Prostate gland (tissue), 2 donors: ENCODE measurements at regions of chr18 and their contacts with region 1.

Region 1: GRCh38 chr18:23619388-23619881 is 33.1 kb upstream of the NPC1 start:
- DNase-seq: no peak
- H3K4me3 ChIP-seq: peak overlapping the region; percentile 29 to 38
- H3K27ac ChIP-seq: peak overlapping the region; percentile 73 to 74
- H3K4me1 ChIP-seq: no peaks in the 10 kb centered on the region
- H3K27me3 ChIP-seq: no peaks in the 10 kb centered on the region
- CTCF ChIP-seq: peak in 1 of 4 experiments; percentile 6
- POLR2A ChIP-seq: no peak

Region 2: DNA sequence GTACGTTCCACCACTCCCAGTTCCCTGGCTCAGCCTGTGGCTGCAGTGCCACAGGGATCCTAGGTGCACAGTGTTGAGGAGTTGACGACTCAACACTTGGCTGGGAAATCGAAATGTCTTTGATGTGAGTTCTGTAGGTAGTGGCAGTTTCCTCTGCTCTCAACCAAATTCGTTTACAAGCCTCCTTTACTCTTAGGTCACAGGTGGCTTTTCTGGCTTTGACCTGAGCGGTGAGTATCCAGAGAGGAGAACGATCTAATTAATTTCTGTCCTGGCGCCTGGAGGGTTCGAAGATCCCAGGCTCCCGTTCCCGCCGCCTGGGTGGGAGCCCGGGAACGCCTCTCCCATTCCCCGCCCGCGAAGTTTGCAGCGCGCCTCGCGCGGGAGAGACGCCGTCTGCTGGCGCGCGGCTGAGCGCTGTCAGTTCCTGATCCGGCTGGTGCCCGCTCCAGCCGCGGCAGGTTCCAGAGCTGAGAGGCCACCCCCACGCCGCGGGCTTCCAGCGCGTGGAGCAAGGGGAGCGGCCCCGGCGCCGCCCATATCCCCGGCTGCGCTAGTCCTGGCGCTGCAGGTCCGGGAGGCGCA is 69.7 kb after region 1 on chr18 and contains the start of gene LAMA3:
- intact Hi-C with region 1: loop called (anchors 5 kb)
- DNase-seq: peak; percentile 60
- H3K4me3 ChIP-seq: peak within 1 kb of the TSS; percentile 46 to 50
- H3K27ac ChIP-seq: peak within 1 kb of the TSS; percentile 58
- H3K4me1 ChIP-seq: no peaks in the 10 kb centered on the region
- H3K27me3 ChIP-seq: no peaks in the 10 kb centered on the region
- CTCF ChIP-seq: peak in 1 of 4 experiments; percentile 33
- POLR2A ChIP-seq: peak; percentile 62
- total RNA-seq, gene LAMA3: 31.3 to 35.9 TPM

Region 3: GRCh38 chr18:23703057-23703986 is 83.9 kb after region 1 on chr18:
- intact Hi-C with region 1: loop called (anchors 1 kb)
- DNase-seq: peak; percentile 57
- H3K4me3 ChIP-seq: no peak overlapping the region
- H3K27ac ChIP-seq: no peak overlapping the region
- H3K4me1 ChIP-seq: no peaks in the 10 kb centered on the region
- H3K27me3 ChIP-seq: no peaks in the 10 kb centered on the region
- CTCF ChIP-seq: peak in 3 of 4 experiments; percentile 59 to 84 (median 82)
- POLR2A ChIP-seq: no peak

Region 4: GRCh38 chr18:23812546-23813440 is 193.4 kb after region 1 on chr18:
- intact Hi-C with region 1: loop called (anchors 5 kb)
- DNase-seq: no peak
- H3K4me3 ChIP-seq: no peak overlapping the region
- H3K27ac ChIP-seq: no peak overlapping the region
- H3K4me1 ChIP-seq: no peaks in the 10 kb centered on the region
- H3K27me3 ChIP-seq: no peaks in the 10 kb centered on the region
- CTCF ChIP-seq: peak; percentile 14 to 65 (median 52)
- POLR2A ChIP-seq: no peak